Activated naive CD4-positive, alpha-beta T cell treated with anti-CD3 and anti-CD28 coated beads for 36 hours (primary cell): ENCODE measurements at regions of chr10 and their contacts with region 1.

Region 1: DNA sequence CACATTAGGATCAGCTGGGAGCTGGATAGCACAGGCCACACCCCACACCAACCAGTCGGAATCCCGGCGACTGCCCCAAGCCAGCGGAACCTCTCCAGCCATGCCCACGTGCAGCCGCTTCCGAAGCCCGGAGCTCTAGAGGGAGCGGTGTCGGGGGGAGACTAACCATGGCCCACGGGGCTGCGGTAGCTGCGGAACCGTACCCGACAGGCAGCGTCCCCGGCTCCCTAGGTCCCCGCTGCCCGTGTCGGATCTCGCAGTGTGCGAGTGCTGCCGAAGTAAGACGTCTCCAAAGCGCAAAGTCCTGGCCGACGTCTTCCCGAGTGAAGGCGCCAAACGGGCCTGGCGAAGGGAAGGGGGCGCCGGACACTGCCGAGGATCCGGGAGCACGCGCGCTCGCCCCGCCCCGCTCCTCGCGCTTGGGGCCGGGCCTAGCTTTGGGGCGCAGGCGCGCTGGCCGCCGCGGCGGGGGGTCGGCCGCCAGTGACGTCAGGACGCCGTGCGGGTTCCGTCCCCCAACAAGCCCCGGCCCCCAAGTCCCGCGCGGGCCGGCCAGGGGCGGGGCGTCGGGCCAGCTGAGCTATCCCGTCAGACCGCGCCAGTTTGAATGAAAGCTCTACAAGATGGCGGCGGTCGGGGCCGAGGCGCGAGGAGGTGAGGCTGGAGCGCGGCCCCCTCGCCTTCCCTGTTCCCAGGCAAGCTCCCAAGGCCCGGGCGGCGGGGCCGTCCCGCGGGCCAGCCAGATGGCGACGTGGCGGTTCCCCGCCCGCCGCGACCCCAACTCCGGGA is at the start of gene SUV39H2:
- DNase-seq: peak; percentile 94
- H3K4me3 Mint-ChIP-seq: peak within 1 kb of the TSS; percentile 94
- H3K27ac Mint-ChIP-seq: peak within 1 kb of the TSS; percentile 81
- H3K4me1 Mint-ChIP-seq: peaks cover 28% of the 10 kb centered on the region
- H3K27me3 Mint-ChIP-seq: no peaks in the 10 kb centered on the region
- total RNA-seq, gene SUV39H2: 35.8 to 38.2 TPM

Region 2: GRCh38 chr10:13348216-13349017 is 1530.0 kb before region 1 on chr10 and contains the start of gene SEPHS1:
- CTCF ChIA-PET with region 1: no interaction called
- intact Hi-C with region 1: loop called (anchors 5 kb)
- DNase-seq: peak; percentile 91
- H3K4me3 Mint-ChIP-seq: peak within 1 kb of the TSS; percentile 88
- H3K27ac Mint-ChIP-seq: peak within 1 kb of the TSS; percentile 94
- H3K4me1 Mint-ChIP-seq: peaks cover 57% of the 10 kb centered on the region
- H3K27me3 Mint-ChIP-seq: no peaks in the 10 kb centered on the region
- total RNA-seq, gene SEPHS1: 75.6 to 79.6 TPM

Region 3: GRCh38 chr10:14536241-14537213 is 341.9 kb before region 1 on chr10:
- CTCF ChIA-PET with region 1: no interaction called
- intact Hi-C with region 1: loop called (anchors 2 kb)
- DNase-seq: peak; percentile 70
- H3K4me3 Mint-ChIP-seq: no peak overlapping the region
- H3K27ac Mint-ChIP-seq: no peak overlapping the region
- H3K4me1 Mint-ChIP-seq: peaks cover 83% of the 10 kb centered on the region
- H3K27me3 Mint-ChIP-seq: no peaks in the 10 kb centered on the region

Region 4: GRCh38 chr10:14904316-14904732 is 25.9 kb after region 1 on chr10:
- CTCF ChIA-PET with region 1: interaction called, 14 read pairs
- intact Hi-C with region 1: no loop called
- DNase-seq: peak; percentile 16
- H3K4me3 Mint-ChIP-seq: no peak overlapping the region
- H3K27ac Mint-ChIP-seq: no peak overlapping the region
- H3K4me1 Mint-ChIP-seq: peaks cover 16% of the 10 kb centered on the region
- H3K27me3 Mint-ChIP-seq: no peaks in the 10 kb centered on the region

Region 5: GRCh38 chr10:14959276-14960057 is 81.0 kb after region 1 on chr10 and contains the start of gene MEIG1:
- CTCF ChIA-PET with region 1: interaction called, 5 read pairs
- intact Hi-C with region 1: loop called (anchors 1 kb)
- DNase-seq: peak; percentile 91
- H3K4me3 Mint-ChIP-seq: peak within 1 kb of the TSS; percentile 98
- H3K27ac Mint-ChIP-seq: peak within 1 kb of the TSS; percentile 98
- H3K4me1 Mint-ChIP-seq: peaks cover 27% of the 10 kb centered on the region
- H3K27me3 Mint-ChIP-seq: no peaks in the 10 kb centered on the region
- total RNA-seq, gene MEIG1: 0.81 to 0.93 TPM

Region 6: DNA sequence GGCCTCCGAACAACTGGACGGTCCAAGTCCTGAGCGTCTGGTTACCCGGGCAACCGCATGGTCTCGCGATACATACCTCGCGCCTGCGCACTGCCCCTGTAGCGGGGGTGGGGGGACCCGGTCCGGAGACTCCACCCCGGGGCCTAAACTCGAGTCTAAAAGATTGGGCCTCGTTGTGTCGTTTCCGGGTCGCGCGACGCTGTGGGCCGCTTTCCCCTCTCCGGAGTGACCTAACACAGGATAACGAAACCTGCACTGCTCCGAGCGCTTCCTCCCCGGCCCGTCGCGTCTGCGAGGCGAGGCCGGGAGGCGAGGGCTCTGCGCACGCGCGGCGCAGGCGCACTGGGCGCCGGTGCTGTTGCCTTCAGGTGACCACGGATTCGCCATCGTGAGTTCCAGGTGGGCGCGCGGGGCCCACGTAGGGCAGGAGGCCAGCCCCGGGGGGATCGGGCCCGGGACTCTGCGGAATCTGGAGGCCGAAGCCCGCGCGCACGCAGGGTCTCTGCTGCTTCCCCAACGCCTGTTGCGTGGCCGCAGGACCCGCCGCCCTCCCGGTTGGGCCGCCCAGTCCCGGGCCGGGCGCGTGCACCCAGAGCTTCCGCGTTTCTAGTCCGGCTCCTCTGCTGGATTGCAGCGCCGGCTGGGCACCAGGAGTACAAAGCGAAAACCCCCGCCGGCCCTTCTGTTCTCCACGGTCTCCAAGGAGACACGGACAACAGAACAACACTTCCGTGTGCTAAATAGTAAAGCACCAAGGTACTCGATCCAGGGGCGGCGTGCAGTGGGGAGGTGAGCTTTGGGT is 218.8 kb after region 1 on chr10 and contains the start of gene RPP38:
- CTCF ChIA-PET with region 1: no interaction called
- intact Hi-C with region 1: loop called (anchors 2 kb)
- DNase-seq: peak; percentile 96
- H3K4me3 Mint-ChIP-seq: peak within 1 kb of the TSS; percentile 97
- H3K27ac Mint-ChIP-seq: peak within 1 kb of the TSS; percentile 94
- H3K4me1 Mint-ChIP-seq: peaks cover 36% of the 10 kb centered on the region
- H3K27me3 Mint-ChIP-seq: no peaks in the 10 kb centered on the region
- total RNA-seq, gene RPP38: 15.6 to 16.3 TPM

Region 7: DNA sequence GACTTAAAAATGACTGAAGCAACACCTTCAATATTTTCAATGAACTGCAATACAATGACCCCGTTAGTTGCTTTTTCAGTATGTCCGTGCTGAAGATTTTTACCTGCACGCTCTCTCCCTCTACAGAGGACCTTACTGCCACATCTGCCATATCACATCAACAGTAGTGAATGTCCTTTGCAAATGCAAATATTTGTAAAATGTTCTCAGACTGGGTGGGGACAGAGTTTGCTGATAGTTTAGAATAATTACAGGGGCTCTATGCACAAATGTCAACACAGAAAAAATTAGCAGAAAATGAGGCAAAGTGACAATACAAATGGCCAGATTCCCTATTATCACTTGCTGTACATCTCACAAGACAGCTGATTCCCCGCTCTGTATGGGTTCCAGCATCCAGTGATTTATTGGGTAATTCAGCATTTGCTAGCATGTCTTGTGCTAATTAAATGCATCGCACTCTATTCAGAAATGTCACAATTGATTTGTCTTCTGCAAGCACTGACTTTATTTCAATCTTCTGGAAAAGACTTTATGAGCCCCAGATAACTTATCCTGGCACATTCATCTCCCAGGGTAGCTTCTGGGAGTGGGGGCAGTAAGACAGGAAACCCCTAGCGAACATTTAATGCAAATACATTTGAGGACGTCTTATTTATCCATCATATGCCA is 1489.3 kb after region 1 on chr10:
- CTCF ChIA-PET with region 1: no interaction called
- intact Hi-C with region 1: no loop called
- DNase-seq: no peak
- H3K4me3 Mint-ChIP-seq: no peak overlapping the region
- H3K27ac Mint-ChIP-seq: no peak overlapping the region
- H3K4me1 Mint-ChIP-seq: no peaks in the 10 kb centered on the region
- H3K27me3 Mint-ChIP-seq: peaks cover 16% of the 10 kb centered on the region